Keratinocyte (primary cell): ENCODE measurements at regions of chr7 and their contacts with region 1.

Region 1: DNA sequence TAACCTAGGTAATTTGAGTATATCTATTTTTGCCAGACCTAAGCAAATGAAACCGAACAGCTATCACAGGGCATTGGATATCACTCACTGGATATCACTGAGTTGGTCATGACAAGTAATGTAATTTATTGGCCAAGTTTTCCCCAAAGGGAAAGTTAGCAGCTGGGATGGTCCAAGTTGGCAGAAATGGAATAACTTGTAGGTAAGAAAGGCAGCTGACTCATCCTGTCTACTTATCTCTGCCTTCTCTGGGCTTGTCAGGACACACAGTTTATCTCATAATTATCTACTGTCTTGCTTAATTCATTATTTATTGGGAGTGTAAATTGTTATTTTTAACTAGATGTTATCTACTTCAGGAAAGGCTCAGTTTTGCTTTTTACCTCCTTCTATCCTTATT is 502.0 kb upstream of the DPP6 start:
- DNase-seq: peak; percentile 50
- H3K4me3 ChIP-seq: peak overlapping the region in 1 of 3 experiments; percentile 9
- H3K27ac ChIP-seq: peak overlapping the region; percentile 62
- H3K4me1 ChIP-seq: peaks cover 17% of the 10 kb centered on the region
- H3K27me3 ChIP-seq: no peaks in the 10 kb centered on the region
- CTCF ChIP-seq: no peak

Region 2: DNA sequence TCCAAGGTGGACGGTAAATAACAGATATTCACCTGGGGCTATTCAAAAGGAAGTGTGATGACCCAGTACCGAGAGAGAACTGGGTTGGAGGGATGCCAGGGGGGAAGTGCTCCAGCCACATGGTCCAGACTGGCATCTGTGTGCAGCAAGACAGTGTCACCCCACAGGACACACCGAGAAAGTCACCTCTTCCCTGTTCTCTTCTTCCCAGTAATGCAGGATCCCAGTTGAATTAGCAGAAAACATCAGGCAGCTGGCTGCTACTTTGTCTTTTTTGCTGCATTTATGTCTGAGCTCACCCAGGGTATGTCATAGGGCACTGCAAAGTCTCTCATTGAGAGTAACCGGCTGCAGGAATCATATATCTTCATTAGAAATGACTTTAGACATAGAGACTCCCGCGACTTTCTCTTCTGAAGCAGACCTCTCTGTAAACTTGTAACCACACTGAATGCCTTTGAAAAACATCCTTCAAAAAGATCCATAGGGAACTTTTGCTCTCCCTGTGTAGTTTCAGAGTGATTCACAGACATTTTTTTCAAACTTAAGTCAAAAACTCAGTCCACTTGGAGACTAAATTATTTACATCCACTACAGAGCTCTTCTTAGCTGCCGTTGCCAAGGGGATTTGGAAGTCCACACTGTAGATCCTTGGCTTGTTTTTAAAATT is 107.0 kb before region 1 on chr7:
- dilution Hi-C with region 1: no loop called
- DNase-seq: no peak
- H3K4me3 ChIP-seq: no peak overlapping the region
- H3K27ac ChIP-seq: no peak overlapping the region
- H3K4me1 ChIP-seq: no peaks in the 10 kb centered on the region
- H3K27me3 ChIP-seq: no peaks in the 10 kb centered on the region
- CTCF ChIP-seq: no peak

Region 3: GRCh38 chr7:153496257-153496656 is 53.9 kb before region 1 on chr7:
- dilution Hi-C with region 1: loop called (anchors 5 kb)
- DNase-seq: no peak
- H3K4me3 ChIP-seq: no peak overlapping the region
- H3K27ac ChIP-seq: no peak overlapping the region
- H3K4me1 ChIP-seq: no peaks in the 10 kb centered on the region
- H3K27me3 ChIP-seq: no peaks in the 10 kb centered on the region
- CTCF ChIP-seq: no peak